ENCODE measurements at regions of chr2 and their contacts with region 1.

Region 1: GRCh38 chr2:127649684-127650040 is 3.7 kb downstream of the GPR17 start:
- DNase-seq: peak; percentile 67
- H3K4me3 Mint-ChIP-seq: no peak overlapping the region
- H3K27ac Mint-ChIP-seq: no peak overlapping the region
- H3K4me1 Mint-ChIP-seq: peaks cover 6% of the 10 kb centered on the region
- H3K27me3 Mint-ChIP-seq: no peaks in the 10 kb centered on the region

Region 2: DNA sequence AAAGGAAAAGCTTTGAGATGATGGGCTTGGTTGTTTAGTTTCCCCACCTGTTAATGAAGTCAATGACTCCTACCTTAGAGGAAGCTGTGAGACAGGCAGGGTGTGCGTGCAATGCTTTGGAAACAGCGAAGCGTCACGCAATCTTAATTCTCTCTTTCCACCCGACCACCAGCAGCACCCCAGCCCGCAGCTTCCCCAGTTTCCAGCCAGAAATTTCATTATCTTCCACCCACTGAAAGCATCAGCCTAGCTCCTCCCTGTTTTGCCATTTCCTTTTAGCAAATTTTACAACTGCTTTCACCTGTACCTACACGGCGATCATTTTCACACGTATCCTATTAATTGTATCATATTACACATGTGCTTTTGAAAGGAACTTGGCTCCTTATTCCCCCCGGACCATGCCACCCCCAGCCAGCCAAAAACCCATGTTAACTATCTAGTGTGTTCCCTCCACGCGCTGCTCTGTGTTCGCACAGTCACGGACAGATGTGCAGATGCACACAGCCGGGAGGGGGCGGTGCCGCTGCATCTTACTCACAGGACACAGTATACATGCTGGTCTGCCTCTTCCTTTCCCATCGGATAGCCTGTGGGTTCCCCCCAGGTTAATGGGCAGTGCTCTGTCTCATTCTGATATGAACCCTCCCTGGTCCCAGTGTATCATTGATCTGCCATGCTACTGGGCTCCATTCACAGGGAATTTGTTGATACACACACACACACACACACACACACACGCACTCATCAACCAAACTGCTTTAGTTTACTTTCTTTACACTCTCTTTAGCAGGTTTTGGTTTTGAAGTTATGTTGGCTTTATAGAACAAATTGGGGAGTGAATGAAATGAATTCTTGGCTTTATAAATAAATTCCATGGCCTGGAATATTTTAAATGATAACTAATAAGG is 451.9 kb before region 1 on chr2:
- intact Hi-C with region 1: loop called (anchors 5 kb)
- DNase-seq: peak; percentile 28
- H3K4me3 Mint-ChIP-seq: peak overlapping the region; percentile 58
- H3K27ac Mint-ChIP-seq: no peak overlapping the region
- H3K4me1 Mint-ChIP-seq: peaks cover 2% of the 10 kb centered on the region
- H3K27me3 Mint-ChIP-seq: no peaks in the 10 kb centered on the region

Region 3: DNA sequence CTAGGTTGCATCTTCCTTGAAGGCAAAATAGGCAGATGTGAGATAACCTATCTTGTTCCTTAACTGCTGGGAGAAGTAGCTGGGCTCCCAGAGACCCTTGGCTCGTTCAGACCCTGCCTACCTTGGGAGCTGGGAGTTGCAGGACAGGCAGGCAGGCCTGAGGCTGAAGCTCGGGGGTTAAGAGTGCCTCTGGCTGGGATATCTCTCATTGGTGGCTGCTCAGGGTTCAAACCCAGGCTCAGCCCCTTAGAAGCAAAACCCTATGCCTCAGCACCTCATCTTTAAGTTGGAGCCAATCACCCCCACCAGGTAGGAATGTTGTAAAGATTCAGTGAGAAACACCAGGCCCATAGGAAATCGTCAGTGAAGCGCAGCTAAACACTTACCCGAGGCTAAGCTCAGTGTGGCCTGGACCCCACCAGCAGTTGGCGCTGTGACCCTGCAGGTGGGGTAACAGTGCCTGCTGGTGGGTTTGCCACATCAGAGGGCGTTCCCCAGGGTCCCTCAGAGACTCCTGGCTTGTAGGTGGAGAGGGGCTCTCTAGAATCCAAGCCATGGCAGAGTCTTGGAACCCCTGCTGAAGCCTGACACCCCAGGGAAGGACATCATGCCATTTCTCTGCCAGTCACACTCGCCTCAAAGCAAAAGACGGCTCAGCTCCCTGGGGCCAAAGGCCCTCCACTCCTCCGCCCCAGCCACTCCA is 58.3 kb before region 1 on chr2:
- intact Hi-C with region 1: loop called (anchors 1 kb)
- DNase-seq: peak; percentile 36
- H3K4me3 Mint-ChIP-seq: no peak overlapping the region
- H3K27ac Mint-ChIP-seq: no peak overlapping the region
- H3K4me1 Mint-ChIP-seq: peaks cover 4% of the 10 kb centered on the region
- H3K27me3 Mint-ChIP-seq: no peaks in the 10 kb centered on the region

Measured in activated T-helper 2 cell treated with anti-CD3 and anti-CD28 coated beads, Interferon-gamma antibody, Interleukin-2, Interleukin-4, amounts not matched to agents 10 μg/mL and 5 μg/mL and 100 μg/mL, durations not matched to agents 14 hours and 24 hours and 36 hours (primary cell).